A673 (cell line): ENCODE measurements at regions of chr20 and their contacts with region 1.

Region 1: DNA sequence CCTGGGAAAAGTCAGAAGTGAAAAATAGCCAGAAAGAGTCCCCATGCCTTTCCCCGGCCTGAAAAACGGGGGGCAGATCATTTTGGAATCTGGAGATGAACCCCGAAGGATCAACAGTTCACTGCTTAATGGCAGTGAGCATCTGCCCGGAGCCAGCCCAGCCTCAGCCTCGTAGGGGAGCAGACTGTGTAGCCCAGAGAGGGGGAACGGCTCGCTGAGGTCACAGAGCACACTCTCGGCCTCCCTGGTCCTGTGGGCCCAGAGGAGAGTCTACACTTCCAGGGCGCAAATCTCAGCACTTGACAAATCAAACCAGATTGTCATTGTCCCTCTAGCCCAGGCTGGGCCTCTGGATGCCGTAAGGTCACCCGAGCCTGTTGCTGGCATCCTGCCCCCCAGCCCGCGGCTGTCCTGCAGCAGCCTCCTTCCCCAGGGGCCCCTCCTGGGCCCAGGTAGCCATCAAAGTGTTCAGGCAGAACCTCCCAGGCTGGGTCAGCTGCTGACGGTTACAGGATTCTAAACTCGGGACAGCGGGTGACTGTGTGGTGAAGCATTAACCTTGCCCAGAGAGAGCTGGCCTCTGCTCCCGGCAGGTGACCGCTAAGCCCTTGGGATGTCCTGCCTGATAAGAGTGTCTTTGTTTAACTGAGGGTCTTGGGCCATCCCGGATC is 56.1 kb downstream of the GNAS-AS1 start:
- DNase-seq: no peak
- H3K4me3 ChIP-seq: no peak overlapping the region
- H3K27ac ChIP-seq: no peak overlapping the region
- H3K4me1 ChIP-seq: no peaks in the 10 kb centered on the region
- H3K27me3 ChIP-seq: peaks cover 9% of the 10 kb centered on the region
- CTCF ChIP-seq: no peak

Region 2: DNA sequence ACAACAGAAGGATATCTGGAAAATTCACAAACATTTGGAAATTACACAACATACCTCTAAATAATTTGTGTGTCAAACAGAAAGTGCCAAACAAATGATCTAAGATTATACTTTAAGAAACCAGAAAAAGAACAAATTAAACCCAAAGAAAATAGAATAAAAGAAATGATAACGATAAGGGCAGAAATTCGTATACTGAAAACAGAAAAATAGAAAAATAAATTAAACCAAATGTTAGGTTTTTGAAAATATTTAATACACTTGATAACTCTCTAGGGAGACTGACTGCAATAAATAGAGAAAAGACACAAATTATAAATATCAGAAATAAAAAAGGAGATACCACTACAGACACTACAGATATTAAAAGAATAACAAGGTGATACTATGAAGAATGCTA is 67.4 kb before region 1 on chr20:
- CTCF ChIA-PET with region 1: no interaction called
- POLR2A ChIA-PET with region 1: interaction called, 13 read pairs
- intact Hi-C with region 1: no loop called
- DNase-seq: no peak
- H3K4me3 ChIP-seq: no peak overlapping the region
- H3K27ac ChIP-seq: no peak overlapping the region
- H3K4me1 ChIP-seq: no peaks in the 10 kb centered on the region
- H3K27me3 ChIP-seq: peaks cover 8% of the 10 kb centered on the region
- CTCF ChIP-seq: no peak